Naive thymus-derived CD4-positive, alpha-beta T cell (primary cell): ENCODE measurements at regions of chr15 and their contacts with region 1.

Region 1: GRCh38 chr15:84955089-84955848 is 26.4 kb upstream of the PDE8A start:
- DNase-seq: peak in 7 of 9 donors; percentile 11 to 40 (median 34)
- ATAC-seq: peak; percentile 74
- H3K4me3 ChIP-seq: no peak overlapping the region
- H3K4me3 Mint-ChIP-seq: peak overlapping the region in 3 of 10 donors; percentile 12 to 37 (median 33)
- H3K27ac ChIP-seq: no peak overlapping the region
- H3K27ac Mint-ChIP-seq: no peak overlapping the region
- H3K4me1 ChIP-seq: no peaks in the 10 kb centered on the region
- H3K4me1 Mint-ChIP-seq: peaks cover 4 to 12% (median 11%) of the 10 kb centered on the region in 7 donors
- H3K27me3 ChIP-seq: no peaks in the 10 kb centered on the region
- H3K27me3 Mint-ChIP-seq: peaks cover 5 to 39% (median 8%) of the 10 kb centered on the region in 5 donors

Region 2: GRCh38 chr15:85005319-85005718 is 50.0 kb after region 1 on chr15:
- CTCF ChIA-PET with region 1: no interaction called
- POLR2A ChIA-PET with region 1: no interaction called
- intact Hi-C with region 1: loop called in 1 of 2 experiments (anchors 1 kb)
- DNase-seq: no peak
- ATAC-seq: no peak
- H3K4me3 ChIP-seq: no peak overlapping the region
- H3K4me3 Mint-ChIP-seq: no peak overlapping the region
- H3K27ac ChIP-seq: no peak overlapping the region
- H3K27ac Mint-ChIP-seq: no peak overlapping the region
- H3K4me1 ChIP-seq: peaks cover 3 to 5% of the 10 kb centered on the region in 2 donors
- H3K4me1 Mint-ChIP-seq: peaks cover 22 to 88% (median 77%) of the 10 kb centered on the region in 7 donors
- H3K27me3 ChIP-seq: no peaks in the 10 kb centered on the region
- H3K27me3 Mint-ChIP-seq: no peaks in the 10 kb centered on the region

Region 3: DNA sequence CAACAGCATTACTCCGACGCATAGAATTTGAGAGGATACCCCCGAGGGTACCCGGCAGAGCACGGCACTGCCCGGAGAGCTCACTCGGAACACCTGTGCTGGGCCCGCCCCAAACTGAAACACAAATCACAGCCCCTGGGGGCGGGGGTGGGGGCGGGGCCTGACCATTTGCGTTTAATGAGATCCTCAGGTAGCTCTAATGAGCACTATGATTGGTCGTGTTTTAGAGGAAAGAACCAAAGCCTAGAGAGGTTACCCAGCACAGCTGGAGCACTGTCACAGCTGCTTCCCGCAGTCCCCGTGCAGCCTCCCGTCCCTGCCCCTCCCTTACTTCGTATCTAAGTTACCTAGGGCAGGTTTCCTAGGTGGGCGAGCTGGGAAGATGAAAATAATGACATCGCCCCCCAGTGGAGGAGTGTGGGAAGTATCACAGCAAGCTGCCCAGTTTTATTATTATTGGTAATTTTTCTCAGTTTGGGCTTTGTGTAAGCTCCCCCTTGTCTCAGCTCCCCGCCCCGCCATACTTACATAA is 213.4 kb after region 1 on chr15:
- CTCF ChIA-PET with region 1: no interaction called
- POLR2A ChIA-PET with region 1: no interaction called
- intact Hi-C with region 1: loop called in 1 of 2 experiments (anchors 1 kb)
- DNase-seq: peak in 8 of 9 donors; percentile 10 to 49 (median 37)
- ATAC-seq: peak; percentile 80
- H3K4me3 ChIP-seq: peak overlapping the region; percentile 5
- H3K4me3 Mint-ChIP-seq: peak overlapping the region in 9 of 10 donors; percentile 34 to 74 (median 65)
- H3K27ac ChIP-seq: no peak overlapping the region
- H3K27ac Mint-ChIP-seq: no peak overlapping the region
- H3K4me1 ChIP-seq: peaks cover 0 to 4% of the 10 kb centered on the region in 2 donors
- H3K4me1 Mint-ChIP-seq: peaks cover 0 to 15% (median 0%) of the 10 kb centered on the region in 7 donors
- H3K27me3 ChIP-seq: peaks cover 0 to 2% of the 10 kb centered on the region in 2 donors
- H3K27me3 Mint-ChIP-seq: peaks cover 13 to 47% (median 34%) of the 10 kb centered on the region in 5 donors